OCI-LY7 (cell line): ENCODE measurements at regions of chr22 and their contacts with region 1.

Region 1: DNA sequence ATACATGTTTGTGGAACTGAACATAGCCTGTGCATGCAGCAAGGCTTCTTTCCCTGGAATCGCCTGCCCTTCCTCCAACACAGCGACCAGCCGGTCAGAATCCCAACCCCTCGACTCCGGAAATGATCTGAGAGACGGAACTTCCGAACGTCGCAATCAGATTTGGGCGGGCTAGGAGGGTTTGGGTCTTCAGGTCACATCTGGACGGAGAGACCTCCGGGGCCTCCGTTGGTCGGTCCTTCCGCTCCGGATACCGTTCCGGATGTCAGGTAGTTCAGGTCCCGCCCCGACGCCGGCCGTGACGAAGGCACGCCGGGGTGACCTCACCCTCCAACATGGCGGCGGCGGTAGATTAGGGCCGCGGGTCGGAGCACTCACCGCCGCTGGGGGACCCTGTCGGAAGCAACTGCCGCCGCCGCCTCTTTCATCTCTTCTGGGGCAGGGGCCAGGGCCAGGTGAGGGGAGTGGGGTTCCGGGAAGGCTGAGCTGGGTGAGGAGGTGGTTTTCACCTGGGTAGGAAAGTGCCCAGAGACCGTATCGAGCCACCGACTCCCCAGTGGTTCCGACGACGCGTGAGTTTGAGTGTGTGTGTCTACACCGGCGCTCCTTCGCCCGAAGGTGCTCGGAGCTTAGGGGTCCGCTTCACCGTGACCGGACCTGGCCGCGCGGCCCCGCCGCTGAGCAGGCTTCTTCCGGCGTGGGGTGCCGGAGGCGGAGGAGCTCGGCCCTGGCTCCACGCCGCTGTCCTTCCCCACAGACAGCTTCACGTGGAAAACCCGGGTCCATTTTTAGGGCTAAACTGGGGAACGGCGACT is at the start of gene BCL2L13:
- DNase-seq: peak; percentile 95
- H3K4me3 ChIP-seq: peak within 1 kb of the TSS; percentile 81
- H3K27ac ChIP-seq: peak within 1 kb of the TSS; percentile 81
- H3K4me1 ChIP-seq: peaks cover 19% of the 10 kb centered on the region
- CTCF ChIP-seq: no peak
- total RNA-seq, gene BCL2L13: 21.7 and 25.2 TPM in 2 replicates

Region 2: GRCh38 chr22:17562906-17563870 is 75.5 kb before region 1 on chr22 and contains the start of gene SLC25A18:
- CTCF ChIA-PET with region 1: interaction called, 4 read pairs
- POLR2A ChIA-PET with region 1: no interaction called
- intact Hi-C with region 1: loop called (anchors 2 kb)
- DNase-seq: no peak
- H3K4me3 ChIP-seq: no peak within 1 kb of the TSS
- H3K27ac ChIP-seq: no peak within 1 kb of the TSS
- H3K4me1 ChIP-seq: peaks cover 30% of the 10 kb centered on the region
- CTCF ChIP-seq: 0 out of 2 replicates have a peak, but pooled peaks have one; percentile 21
- total RNA-seq, gene SLC25A18: not detected in 2 replicates

Region 3: DNA sequence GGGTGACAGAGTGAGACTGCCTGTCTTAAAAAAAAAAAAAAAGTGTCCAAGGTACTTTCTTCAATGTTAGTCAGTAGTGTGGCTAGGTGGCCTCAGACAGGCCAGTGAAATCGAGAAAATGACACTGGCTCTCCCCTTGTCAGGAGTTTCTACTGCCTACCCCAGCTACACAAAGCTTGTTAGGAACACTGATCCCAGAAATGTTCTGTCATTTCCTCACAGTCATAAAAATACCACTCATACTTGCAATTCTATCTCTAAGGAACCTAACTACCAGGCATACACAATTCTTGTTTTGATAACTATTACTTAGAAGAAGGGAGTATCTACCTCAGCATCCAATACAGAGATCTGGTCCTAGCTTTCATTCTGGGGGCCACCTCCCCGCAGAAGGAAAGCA is 41.4 kb before region 1 on chr22:
- CTCF ChIA-PET with region 1: no interaction called
- POLR2A ChIA-PET with region 1: interaction called, 4 read pairs
- intact Hi-C with region 1: loop called (anchors 1 kb)
- DNase-seq: no peak
- H3K4me3 ChIP-seq: no peak overlapping the region
- H3K27ac ChIP-seq: no peak overlapping the region
- H3K4me1 ChIP-seq: peaks cover 36% of the 10 kb centered on the region
- CTCF ChIP-seq: no peak